ENCODE measurements at regions of chr3 and their contacts with region 1.

Region 1: DNA sequence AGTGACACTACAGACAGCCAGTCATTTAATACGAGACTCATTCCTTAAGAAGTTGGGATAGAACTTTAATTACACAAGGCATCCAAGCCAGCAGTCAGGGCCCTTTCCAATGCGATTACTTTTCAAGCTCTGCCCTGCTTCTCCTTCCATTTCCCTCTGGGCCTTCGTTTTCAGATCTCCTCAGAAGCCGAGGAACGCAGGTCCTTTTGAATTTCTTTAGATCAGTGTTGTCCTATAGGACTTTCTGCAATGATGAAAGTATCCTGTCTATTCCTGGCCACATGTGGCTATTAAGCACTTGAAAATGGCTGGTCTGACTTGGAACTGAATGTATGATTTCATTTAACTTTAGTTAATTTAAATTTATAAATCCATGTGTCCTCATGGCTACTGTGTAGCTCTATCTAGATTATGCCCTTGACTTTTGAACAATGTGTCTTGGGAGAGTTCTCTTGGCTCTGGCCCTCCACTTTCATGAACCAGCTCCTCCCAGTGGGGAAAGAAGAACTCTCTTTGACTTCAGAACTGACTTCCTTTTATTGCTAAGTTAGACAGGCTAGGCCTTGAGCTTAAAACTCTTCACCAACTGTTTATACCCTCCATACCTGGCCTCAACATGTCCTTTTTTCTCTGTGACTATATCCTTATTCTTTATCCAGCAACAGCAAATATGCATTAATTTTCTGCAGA is 22.6 kb downstream of the TGFBR2 start:
- DNase-seq: peak in 4 of 5 donors; percentile 38 to 54 (median 44)
- H3K4me3 ChIP-seq: no peak overlapping the region
- H3K4me3 Mint-ChIP-seq: peak overlapping the region in 7 of 8 donors; percentile 55 to 82 (median 64)
- H3K27ac ChIP-seq: peak overlapping the region; percentile 60
- H3K27ac Mint-ChIP-seq: peak overlapping the region; percentile 89 to 97 (median 94)
- H3K4me1 ChIP-seq: peaks cover 99% of the 10 kb centered on the region
- H3K4me1 Mint-ChIP-seq: peaks cover 71 to 98% (median 84%) of the 10 kb centered on the region in 4 donors
- H3K27me3 ChIP-seq: no peaks in the 10 kb centered on the region
- H3K27me3 Mint-ChIP-seq: no peaks in the 10 kb centered on the region

Region 2: GRCh38 chr3:30112902-30113484 is 516.1 kb before region 1 on chr3:
- CTCF ChIA-PET with region 1: no interaction called
- POLR2A ChIA-PET with region 1: no interaction called
- intact Hi-C with region 1: loop called (anchors 1 kb)
- DNase-seq: peak in 4 of 5 donors; percentile 29 to 37 (median 34)
- H3K4me3 ChIP-seq: no peak overlapping the region
- H3K4me3 Mint-ChIP-seq: no peak overlapping the region
- H3K27ac ChIP-seq: no peak overlapping the region
- H3K27ac Mint-ChIP-seq: no peak overlapping the region
- H3K4me1 ChIP-seq: no peaks in the 10 kb centered on the region
- H3K4me1 Mint-ChIP-seq: no peaks in the 10 kb centered on the region
- H3K27me3 ChIP-seq: no peaks in the 10 kb centered on the region
- H3K27me3 Mint-ChIP-seq: peaks cover 2 to 5% of the 10 kb centered on the region in 2 donors

Region 3: GRCh38 chr3:30347679-30348216 is 281.3 kb before region 1 on chr3:
- CTCF ChIA-PET with region 1: interaction called, 10 read pairs
- POLR2A ChIA-PET with region 1: interaction called, 4 read pairs
- intact Hi-C with region 1: no loop called
- DNase-seq: peak in 4 of 5 donors; percentile 19 to 46 (median 26)
- H3K4me3 ChIP-seq: no peak overlapping the region
- H3K4me3 Mint-ChIP-seq: peak overlapping the region in 4 of 8 donors; percentile 4 to 35 (median 21)
- H3K27ac ChIP-seq: no peak overlapping the region
- H3K27ac Mint-ChIP-seq: peak overlapping the region in 1 of 7 donors; percentile 36
- H3K4me1 ChIP-seq: peaks cover 56% of the 10 kb centered on the region
- H3K4me1 Mint-ChIP-seq: peaks cover 30 to 66% (median 47%) of the 10 kb centered on the region in 4 donors
- H3K27me3 ChIP-seq: no peaks in the 10 kb centered on the region
- H3K27me3 Mint-ChIP-seq: no peaks in the 10 kb centered on the region

Region 4: GRCh38 chr3:30606301-30607031 is 22.6 kb before region 1 on chr3 and contains the start of gene TGFBR2:
- CTCF ChIA-PET with region 1: interaction called, 75 read pairs
- POLR2A ChIA-PET with region 1: interaction called, 290 read pairs
- intact Hi-C with region 1: loop called (anchors 1 kb)
- DNase-seq: peak; percentile 67 to 90 (median 69)
- H3K4me3 ChIP-seq: peak within 1 kb of the TSS; percentile 82 to 89
- H3K4me3 Mint-ChIP-seq: peak within 1 kb of the TSS; percentile 97 to 99 (median 99)
- H3K27ac ChIP-seq: peak within 1 kb of the TSS; percentile 85
- H3K27ac Mint-ChIP-seq: peak within 1 kb of the TSS; percentile 92 to 99 (median 98)
- H3K4me1 ChIP-seq: peaks cover 57% of the 10 kb centered on the region
- H3K4me1 Mint-ChIP-seq: peaks cover 43 to 67% (median 48%) of the 10 kb centered on the region in 4 donors
- H3K27me3 ChIP-seq: no peaks in the 10 kb centered on the region
- H3K27me3 Mint-ChIP-seq: no peaks in the 10 kb centered on the region
- total RNA-seq, gene TGFBR2: 110 TPM

Region 5: GRCh38 chr3:30644593-30645012 is 15.6 kb after region 1 on chr3:
- CTCF ChIA-PET with region 1: interaction called, 18 read pairs
- POLR2A ChIA-PET with region 1: interaction called, 580 read pairs
- intact Hi-C with region 1: loop called (anchors 1 kb)
- DNase-seq: peak; percentile 61 to 87 (median 66)
- H3K4me3 ChIP-seq: peak overlapping the region in 1 of 2 donors; percentile 37
- H3K4me3 Mint-ChIP-seq: peak overlapping the region; percentile 71 to 86 (median 78)
- H3K27ac ChIP-seq: peak overlapping the region; percentile 66
- H3K27ac Mint-ChIP-seq: peak overlapping the region; percentile 88 to 97 (median 93)
- H3K4me1 ChIP-seq: peaks cover 99% of the 10 kb centered on the region
- H3K4me1 Mint-ChIP-seq: peaks cover 77 to 97% (median 87%) of the 10 kb centered on the region in 4 donors
- H3K27me3 ChIP-seq: no peaks in the 10 kb centered on the region
- H3K27me3 Mint-ChIP-seq: no peaks in the 10 kb centered on the region

Region 6: GRCh38 chr3:30667280-30667651 is 38.2 kb after region 1 on chr3:
- CTCF ChIA-PET with region 1: interaction called, 15 read pairs
- POLR2A ChIA-PET with region 1: interaction called, 12 read pairs
- intact Hi-C with region 1: no loop called
- DNase-seq: peak; percentile 36 to 57 (median 45)
- H3K4me3 ChIP-seq: no peak overlapping the region
- H3K4me3 Mint-ChIP-seq: peak overlapping the region in 6 of 8 donors; percentile 8 to 79 (median 48)
- H3K27ac ChIP-seq: peak overlapping the region; percentile 42
- H3K27ac Mint-ChIP-seq: peak overlapping the region; percentile 63 to 87 (median 83)
- H3K4me1 ChIP-seq: peaks cover 94% of the 10 kb centered on the region
- H3K4me1 Mint-ChIP-seq: peaks cover 73 to 97% (median 87%) of the 10 kb centered on the region in 4 donors
- H3K27me3 ChIP-seq: no peaks in the 10 kb centered on the region
- H3K27me3 Mint-ChIP-seq: no peaks in the 10 kb centered on the region

Measured in CD4-positive, alpha-beta memory T cell (primary cell).